Lower leg skin (tissue), 4 donors: ENCODE measurements at regions of chr6 and their contacts with region 1.

Region 1: GRCh38 chr6:7725849-7726415 is at the start of gene BMP6:
- DNase-seq: peak; percentile 81 to 96
- H3K4me3 ChIP-seq: peak within 1 kb of the TSS; percentile 28
- CTCF ChIP-seq: no peak
- POLR2A ChIP-seq: no peak
- total RNA-seq, gene BMP6: 1.7 to 11.2 (median 6.2) TPM

Region 2: GRCh38 chr6:7750197-7750596 is 24.3 kb after region 1 on chr6:
- intact Hi-C with region 1: no loop called
- DNase-seq: no peak
- H3K4me3 ChIP-seq: no peak overlapping the region
- CTCF ChIP-seq: no peak
- POLR2A ChIP-seq: no peak

Region 3: DNA sequence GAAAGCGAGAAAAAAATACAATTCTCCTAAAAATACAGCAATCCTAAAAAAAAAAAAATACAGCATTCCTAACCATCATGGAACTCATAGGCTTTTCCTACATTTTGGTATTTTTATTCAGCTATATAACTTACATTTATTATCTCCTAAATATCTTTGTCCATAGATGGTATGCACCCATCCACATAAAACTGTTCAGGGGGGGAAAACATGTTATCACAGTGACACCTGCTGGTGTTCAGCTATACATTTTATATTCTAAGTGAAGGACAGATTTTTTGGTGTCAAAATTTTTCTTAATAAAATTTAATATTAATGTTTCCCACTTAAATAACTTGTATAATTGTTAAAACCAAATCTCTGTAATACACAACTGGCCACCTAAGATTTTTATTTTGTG is 280.3 kb after region 1 on chr6:
- intact Hi-C with region 1: loop called (anchors 2 kb)
- DNase-seq: no peak
- H3K4me3 ChIP-seq: no peak overlapping the region
- CTCF ChIP-seq: no peak
- POLR2A ChIP-seq: no peak

Region 4: GRCh38 chr6:8063761-8064637 is 338.1 kb after region 1 on chr6 and contains the start of gene BLOC1S5:
- intact Hi-C with region 1: loop called (anchors 5 kb)
- DNase-seq: peak; percentile 96 to 99
- H3K4me3 ChIP-seq: peak within 1 kb of the TSS; percentile 81
- CTCF ChIP-seq: peak in 1 of 3 donors; percentile 11
- POLR2A ChIP-seq: peak in 1 of 2 donors; percentile 35
- total RNA-seq, gene BLOC1S5: 7.5 to 11.6 (median 10.4) TPM

Region 5: DNA sequence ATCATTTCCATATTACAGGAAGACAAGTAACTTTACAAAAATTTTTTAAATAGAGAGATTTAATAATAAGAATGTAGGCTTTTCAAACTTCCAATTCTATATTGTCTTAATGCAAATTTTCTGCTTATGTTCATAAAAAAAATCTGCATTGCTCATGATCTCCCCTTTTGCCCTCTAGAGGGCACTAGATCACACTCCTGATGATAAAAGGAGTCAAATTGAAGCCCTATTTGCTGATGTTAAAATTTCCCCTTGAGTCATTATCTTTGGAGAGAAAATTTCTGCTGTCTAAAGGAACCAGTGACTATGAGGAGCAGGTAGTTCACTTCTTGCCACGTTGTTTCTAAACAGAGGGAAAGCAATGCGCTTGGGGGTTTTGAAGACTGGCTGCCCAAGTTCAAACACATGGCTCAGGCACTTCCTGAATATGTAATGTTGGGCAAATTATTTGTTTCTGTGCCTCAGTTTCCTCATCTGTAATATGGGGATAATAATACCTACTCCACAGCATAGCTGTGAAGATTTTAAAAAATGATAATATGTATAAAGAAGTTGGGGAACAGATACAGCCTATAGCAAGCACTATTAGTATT is 1814.7 kb after region 1 on chr6:
- intact Hi-C with region 1: no loop called
- DNase-seq: no peak
- H3K4me3 ChIP-seq: no peak overlapping the region
- CTCF ChIP-seq: no peak
- POLR2A ChIP-seq: no peak